Activated T-helper 1 cell treated with anti-CD3 and anti-CD28 coated beads, Interleukin-12 subunit alpha, Interleukin-12 subunit beta, Interleukin-2, Interleukin-4 antibody, amounts not matched to agents 30 ng/mL and 10 ng/mL and 1 ng/mL, durations not matched to agents 14 hours and 24 hours and 36 hours (primary cell): ENCODE measurements at regions of chr21 and their contacts with region 1.

Region 1: DNA sequence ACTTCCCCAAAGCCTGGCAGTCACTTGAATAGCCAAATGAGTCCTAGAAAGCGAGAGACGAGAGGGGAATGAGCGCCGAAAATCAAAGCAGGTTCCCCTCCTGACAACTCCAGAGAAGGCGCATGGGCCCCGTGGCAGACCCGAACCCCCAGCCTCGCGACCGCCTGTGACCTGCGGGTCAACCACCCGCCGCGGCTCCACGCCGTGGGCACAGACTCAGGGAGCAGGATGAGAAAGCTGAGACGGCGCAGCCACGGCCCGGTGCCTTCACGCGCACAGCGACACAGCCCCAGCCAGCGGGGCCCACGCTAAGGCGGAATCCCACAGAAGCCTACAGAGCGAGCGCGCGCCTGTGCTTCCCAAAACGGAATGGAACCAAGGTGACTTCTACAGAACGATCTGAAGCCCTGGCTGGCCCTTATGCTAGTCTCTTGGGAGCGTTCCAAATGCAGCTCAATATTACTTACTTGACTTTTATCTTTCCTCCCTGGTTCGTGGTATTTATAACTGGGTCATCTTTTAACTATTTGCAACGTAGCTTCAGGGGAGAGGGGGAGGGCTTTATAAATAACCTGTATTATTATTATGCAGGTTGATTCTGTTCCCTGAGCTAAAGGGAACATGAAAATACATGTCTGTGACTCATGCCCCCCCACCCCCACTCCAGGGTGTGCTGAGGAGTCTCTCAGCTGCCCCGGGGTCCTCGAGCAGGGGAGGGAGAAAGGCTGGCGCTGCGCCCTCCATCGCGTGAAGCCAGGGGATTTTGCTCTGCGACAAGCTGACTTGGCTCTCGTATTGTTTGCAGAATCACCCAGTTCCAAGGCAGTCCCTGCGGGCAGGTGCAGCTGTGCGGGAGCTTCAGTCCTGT is 1.7 kb downstream of the TSPEAR start:
- DNase-seq: no peak
- H3K4me3 Mint-ChIP-seq: no peak overlapping the region
- H3K27ac Mint-ChIP-seq: no peak overlapping the region
- H3K4me1 Mint-ChIP-seq: peaks cover 11% of the 10 kb centered on the region
- H3K27me3 Mint-ChIP-seq: peaks cover 75% of the 10 kb centered on the region

Region 2: DNA sequence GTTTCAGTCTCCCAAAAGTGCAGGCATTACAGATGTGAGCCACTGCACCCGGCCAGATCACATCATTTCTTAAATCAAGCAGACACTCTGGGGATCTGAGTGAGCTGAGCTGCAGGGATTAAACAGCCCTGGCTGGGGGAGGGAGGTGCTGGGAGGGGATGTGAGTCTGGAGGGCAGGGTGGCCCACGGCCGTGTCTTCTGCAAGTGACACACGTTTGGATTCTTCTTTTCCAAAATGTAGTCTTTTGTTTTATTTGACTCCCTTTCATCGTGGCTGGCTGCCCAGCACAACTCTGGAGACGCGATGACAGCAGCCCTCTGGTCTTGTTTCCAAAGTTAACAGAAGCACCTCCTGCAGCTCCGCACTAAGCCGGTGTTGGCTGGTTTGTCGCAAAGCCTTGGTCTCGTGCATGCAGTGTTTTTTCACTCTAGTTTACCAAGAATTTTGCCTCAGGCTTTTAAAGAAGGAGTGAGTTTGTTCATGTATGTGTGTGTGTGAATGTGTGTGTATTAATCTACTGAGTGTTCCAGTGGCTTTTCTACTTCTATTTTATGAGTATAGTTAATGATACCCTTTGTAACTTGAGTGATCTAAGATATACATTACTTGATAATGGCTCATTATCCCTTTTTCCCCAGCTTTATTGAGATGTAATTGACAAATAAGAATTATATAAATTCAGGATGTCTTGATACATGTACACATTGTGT is 126.4 kb before region 1 on chr21:
- intact Hi-C with region 1: loop called (anchors 10 kb)
- DNase-seq: no peak
- H3K4me3 Mint-ChIP-seq: no peak overlapping the region
- H3K27ac Mint-ChIP-seq: no peak overlapping the region
- H3K4me1 Mint-ChIP-seq: peaks cover 16% of the 10 kb centered on the region
- H3K27me3 Mint-ChIP-seq: peaks cover 34% of the 10 kb centered on the region

Region 3: DNA sequence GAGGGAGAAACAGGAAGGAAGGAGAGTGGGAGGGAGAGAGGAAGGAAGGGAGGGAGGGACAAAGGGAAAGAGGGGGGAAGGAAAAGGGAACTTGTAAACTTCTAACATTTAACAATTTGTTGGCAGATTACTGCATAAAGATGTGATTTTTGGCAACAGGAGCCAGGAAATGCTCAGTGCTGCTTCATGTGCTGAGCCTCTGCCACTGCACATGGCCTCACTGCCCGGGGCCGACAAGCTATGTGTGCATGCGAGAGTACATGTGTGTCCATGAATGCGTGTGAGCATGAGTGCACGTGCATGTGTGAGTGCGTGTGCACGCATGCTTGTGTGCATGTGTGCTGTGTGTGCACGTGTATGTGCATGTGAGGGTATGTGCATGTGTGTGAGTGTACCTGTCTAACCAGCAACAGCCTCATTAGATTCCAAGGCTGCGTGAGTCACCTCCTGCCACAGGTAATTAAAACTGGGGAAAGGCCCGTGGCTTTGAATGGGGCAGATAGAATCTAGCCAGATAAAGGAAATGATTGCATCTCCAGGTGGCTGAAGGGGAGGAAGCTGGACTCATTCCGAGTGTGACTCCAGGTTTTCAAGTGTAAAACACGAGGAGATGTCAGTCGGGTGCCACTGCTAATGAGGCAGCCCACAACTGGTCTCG is 43.1 kb after region 1 on chr21:
- intact Hi-C with region 1: no loop called
- DNase-seq: no peak
- H3K4me3 Mint-ChIP-seq: no peak overlapping the region
- H3K27ac Mint-ChIP-seq: no peak overlapping the region
- H3K4me1 Mint-ChIP-seq: no peaks in the 10 kb centered on the region
- H3K27me3 Mint-ChIP-seq: peaks cover 9% of the 10 kb centered on the region